Ovary (tissue), 10 donors: ENCODE measurements at regions of chr12 and their contacts with region 1.

Region 1: GRCh38 chr12:57452937-57453509 is 2.1 kb upstream of the INHBE start:
- DNase-seq: peak; percentile 59 to 85 (median 83)
- H3K4me3 ChIP-seq: no peak overlapping the region
- H3K27ac ChIP-seq: no peak overlapping the region
- H3K4me1 ChIP-seq: no peaks in the 10 kb centered on the region
- H3K27me3 ChIP-seq: no peaks in the 10 kb centered on the region
- CTCF ChIP-seq: peak; percentile 86 to 88 (median 87)
- EP300 ChIP-seq: no peak
- POLR2A ChIP-seq: no peak

Region 2: DNA sequence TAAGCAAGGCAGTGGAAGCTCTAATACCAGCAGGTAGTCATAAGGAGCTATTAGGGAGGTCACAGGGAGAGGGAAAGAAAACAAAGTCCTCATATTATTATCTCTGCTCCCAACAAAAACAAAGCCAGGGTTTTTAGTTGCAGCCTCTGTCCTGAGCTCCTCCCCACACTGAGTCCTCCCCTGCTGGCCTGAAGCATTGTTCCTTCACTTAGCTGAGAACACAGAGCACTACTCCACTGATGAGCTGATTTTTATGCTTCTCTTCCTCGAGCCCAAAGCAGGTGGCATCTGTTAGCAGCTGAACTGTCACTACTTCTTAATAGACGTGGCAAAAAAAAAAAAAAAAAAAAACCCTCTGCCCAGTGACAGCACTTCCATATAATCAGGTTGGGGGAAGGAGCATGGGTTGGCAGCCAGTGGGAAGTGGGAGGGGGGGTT is 191.6 kb before region 1 on chr12:
- intact Hi-C with region 1: loop called (anchors 2 to 5 kb)
- DNase-seq: no peak
- H3K4me3 ChIP-seq: no peak overlapping the region
- H3K27ac ChIP-seq: no peak overlapping the region
- H3K4me1 ChIP-seq: no peaks in the 10 kb centered on the region
- H3K27me3 ChIP-seq: no peaks in the 10 kb centered on the region
- CTCF ChIP-seq: no peak
- EP300 ChIP-seq: no peak
- POLR2A ChIP-seq: no peak

Region 3: DNA sequence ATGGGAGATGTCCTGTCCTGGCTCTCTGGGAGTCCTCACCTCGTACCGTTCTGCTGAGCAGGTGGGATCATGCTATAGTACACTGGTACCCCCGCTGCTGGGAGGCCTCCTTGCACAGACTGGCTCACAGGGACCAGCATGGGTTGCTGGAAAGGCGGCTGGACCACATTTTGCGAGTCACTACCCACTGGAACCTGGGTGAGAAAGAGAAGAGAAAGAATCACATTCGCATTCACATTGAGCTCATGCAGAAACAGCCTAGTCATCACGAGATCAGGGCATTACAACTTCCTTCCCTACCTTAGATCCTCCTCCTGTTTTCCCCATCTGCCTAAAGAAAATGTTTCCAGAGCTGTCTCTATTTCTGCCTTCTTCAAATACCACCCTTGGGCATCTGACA is 184.8 kb before region 1 on chr12:
- intact Hi-C with region 1: loop called (anchors 2 to 5 kb)
- DNase-seq: no peak
- H3K4me3 ChIP-seq: no peak overlapping the region
- H3K27ac ChIP-seq: no peak overlapping the region
- H3K4me1 ChIP-seq: peaks cover 5% of the 10 kb centered on the region
- H3K27me3 ChIP-seq: no peaks in the 10 kb centered on the region
- CTCF ChIP-seq: no peak
- EP300 ChIP-seq: no peak
- POLR2A ChIP-seq: no peak

Region 4: DNA sequence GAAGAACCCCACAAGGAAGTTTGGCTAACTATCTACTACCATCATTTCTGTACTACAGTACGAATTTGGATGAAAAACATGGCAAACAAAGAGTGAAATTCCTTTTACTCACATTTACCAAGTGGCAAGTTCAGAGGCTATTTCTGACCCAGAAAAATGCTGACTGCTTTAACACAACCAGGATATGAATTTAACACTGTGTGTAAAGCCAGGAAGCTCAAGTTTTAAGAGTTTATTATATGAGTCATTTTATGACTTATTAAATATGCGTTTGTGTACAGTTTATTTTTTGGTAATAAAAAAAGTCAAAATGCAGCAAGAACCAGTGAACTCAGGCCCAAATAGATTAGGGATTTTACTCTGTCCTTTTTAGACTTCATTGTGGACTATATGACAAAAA is 143.6 kb before region 1 on chr12:
- intact Hi-C with region 1: loop called in 3 of 4 experiments (anchors 5 to 10 kb)
- DNase-seq: no peak
- H3K4me3 ChIP-seq: no peak overlapping the region
- H3K27ac ChIP-seq: no peak overlapping the region
- H3K4me1 ChIP-seq: no peaks in the 10 kb centered on the region
- H3K27me3 ChIP-seq: no peaks in the 10 kb centered on the region
- CTCF ChIP-seq: no peak
- EP300 ChIP-seq: no peak
- POLR2A ChIP-seq: no peak